Heart right ventricle (tissue), 16 donors: ENCODE measurements at regions of chr14 and their contacts with region 1.

Region 1: DNA sequence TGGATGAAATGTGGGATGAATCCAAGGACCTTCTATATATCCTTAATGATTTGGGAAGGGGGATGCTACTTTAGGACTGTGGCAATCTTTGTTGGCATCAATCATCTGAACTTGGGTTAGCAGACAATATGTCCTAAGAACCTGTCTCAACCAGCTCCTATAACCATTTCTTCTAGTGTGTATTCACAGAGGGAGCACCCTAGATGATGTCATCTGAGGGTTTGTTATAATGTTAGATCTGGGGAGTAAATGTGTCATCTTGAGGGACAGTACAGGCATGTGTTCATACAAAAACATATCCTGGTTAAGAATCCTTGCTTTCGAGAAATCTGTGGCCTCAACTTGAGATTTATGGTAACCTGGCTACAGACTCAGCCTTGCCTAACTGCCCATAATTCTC is 41.9 kb upstream of the NFKBIA start:
- DNase-seq: no peak
- ATAC-seq: no peak
- H3K4me3 ChIP-seq: no peak overlapping the region
- H3K27ac ChIP-seq: no peak overlapping the region
- H3K4me1 ChIP-seq: no peaks in the 10 kb centered on the region
- H3K27me3 ChIP-seq: no peaks in the 10 kb centered on the region
- CTCF ChIP-seq: no peak

Region 2: GRCh38 chr14:35695647-35696046 is 249.2 kb after region 1 on chr14:
- intact Hi-C with region 1: loop called in 1 of 10 experiments (anchors 10 kb)
- DNase-seq: no peak
- ATAC-seq: no peak
- H3K4me3 ChIP-seq: no peak overlapping the region
- H3K27ac ChIP-seq: no peak overlapping the region
- H3K4me1 ChIP-seq: no peaks in the 10 kb centered on the region
- H3K27me3 ChIP-seq: no peaks in the 10 kb centered on the region
- CTCF ChIP-seq: no peak